Caco-2 (cell line): ENCODE measurements at regions of chr2 and their contacts with region 1.

Region 1: DNA sequence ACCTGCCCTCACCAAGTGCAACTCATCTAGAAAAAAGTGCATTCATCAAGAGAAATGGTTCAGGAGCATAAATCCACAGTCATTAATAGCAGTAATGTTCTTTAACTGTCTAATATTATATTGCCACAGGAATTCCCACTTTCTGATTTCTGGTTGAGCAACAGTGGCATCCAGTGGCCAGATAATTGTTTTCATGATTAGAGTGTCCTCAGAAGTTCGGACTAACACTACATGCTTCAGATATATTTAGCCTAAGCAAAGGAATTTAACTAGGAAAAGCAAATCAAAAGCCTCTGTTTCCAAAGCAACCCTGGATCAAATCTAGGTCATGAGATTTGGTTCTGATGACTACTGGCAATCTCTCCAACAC is 9.8 kb upstream of the ERBB4 start:
- DNase-seq: peak in 1 of 2 experiments; percentile 13
- H3K4me3 ChIP-seq: no peak overlapping the region
- H3K4me3 Mint-ChIP-seq: no peak overlapping the region
- H3K27ac Mint-ChIP-seq: no peak overlapping the region
- H3K4me1 ChIP-seq: no peaks in the 10 kb centered on the region
- H3K4me1 Mint-ChIP-seq: no peaks in the 10 kb centered on the region
- H3K27me3 ChIP-seq: no peaks in the 10 kb centered on the region
- H3K27me3 Mint-ChIP-seq: peaks cover 2% of the 10 kb centered on the region
- CTCF ChIP-seq: peak; percentile 12 to 46

Region 2: GRCh38 chr2:212005085-212005671 is 543.3 kb before region 1 on chr2:
- CTCF ChIA-PET with region 1: no interaction called
- POLR2A ChIA-PET with region 1: no interaction called
- intact Hi-C with region 1: loop called (anchors 5 kb)
- DNase-seq: peak in 1 of 2 experiments; percentile 55
- H3K4me3 ChIP-seq: no peak overlapping the region
- H3K4me3 Mint-ChIP-seq: no peak overlapping the region
- H3K27ac Mint-ChIP-seq: no peak overlapping the region
- H3K4me1 ChIP-seq: peaks cover 4% of the 10 kb centered on the region; the same call in 1 of the 2 replicates
- H3K4me1 Mint-ChIP-seq: peaks cover 11% of the 10 kb centered on the region
- H3K27me3 ChIP-seq: no peaks in the 10 kb centered on the region
- H3K27me3 Mint-ChIP-seq: no peaks in the 10 kb centered on the region
- CTCF ChIP-seq: peak; percentile 41 to 72

Region 3: DNA sequence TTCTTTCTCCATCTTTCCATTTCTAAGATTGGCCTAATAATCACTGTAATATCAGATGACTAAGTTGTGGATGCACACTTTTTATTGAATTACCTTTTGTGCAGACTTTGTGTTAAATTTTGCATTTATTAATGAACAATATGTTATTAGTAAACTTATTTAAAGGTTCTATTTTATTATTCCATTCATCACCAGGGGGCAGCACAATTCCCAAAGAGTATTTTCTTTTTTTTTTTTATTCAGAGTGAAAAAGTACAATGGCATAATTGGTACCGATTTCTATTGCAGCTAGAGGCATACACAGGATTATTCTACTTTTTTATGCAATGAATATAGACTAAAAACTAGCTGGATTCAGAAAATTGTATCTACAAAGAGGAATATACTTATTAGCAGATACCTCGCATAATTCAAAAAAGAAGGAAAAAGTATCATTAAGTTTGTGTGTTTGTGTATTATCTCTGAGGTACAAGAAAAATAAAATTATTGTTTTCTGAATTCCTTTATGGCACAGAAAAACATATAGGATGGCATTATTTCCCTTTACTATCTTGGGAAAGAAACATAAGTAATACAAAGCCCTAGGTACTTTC is 400.4 kb before region 1 on chr2:
- CTCF ChIA-PET with region 1: no interaction called
- POLR2A ChIA-PET with region 1: no interaction called
- intact Hi-C with region 1: loop called (anchors 1 kb)
- DNase-seq: peak in 1 of 2 experiments; percentile 26
- H3K4me3 ChIP-seq: no peak overlapping the region
- H3K4me3 Mint-ChIP-seq: no peak overlapping the region
- H3K27ac Mint-ChIP-seq: no peak overlapping the region
- H3K4me1 ChIP-seq: no peaks in the 10 kb centered on the region
- H3K4me1 Mint-ChIP-seq: no peaks in the 10 kb centered on the region
- H3K27me3 ChIP-seq: no peaks in the 10 kb centered on the region
- H3K27me3 Mint-ChIP-seq: no peaks in the 10 kb centered on the region
- CTCF ChIP-seq: peak; percentile 11 to 49